ENCODE measurements at regions of chr2 and their contacts with region 1.

Region 1: DNA sequence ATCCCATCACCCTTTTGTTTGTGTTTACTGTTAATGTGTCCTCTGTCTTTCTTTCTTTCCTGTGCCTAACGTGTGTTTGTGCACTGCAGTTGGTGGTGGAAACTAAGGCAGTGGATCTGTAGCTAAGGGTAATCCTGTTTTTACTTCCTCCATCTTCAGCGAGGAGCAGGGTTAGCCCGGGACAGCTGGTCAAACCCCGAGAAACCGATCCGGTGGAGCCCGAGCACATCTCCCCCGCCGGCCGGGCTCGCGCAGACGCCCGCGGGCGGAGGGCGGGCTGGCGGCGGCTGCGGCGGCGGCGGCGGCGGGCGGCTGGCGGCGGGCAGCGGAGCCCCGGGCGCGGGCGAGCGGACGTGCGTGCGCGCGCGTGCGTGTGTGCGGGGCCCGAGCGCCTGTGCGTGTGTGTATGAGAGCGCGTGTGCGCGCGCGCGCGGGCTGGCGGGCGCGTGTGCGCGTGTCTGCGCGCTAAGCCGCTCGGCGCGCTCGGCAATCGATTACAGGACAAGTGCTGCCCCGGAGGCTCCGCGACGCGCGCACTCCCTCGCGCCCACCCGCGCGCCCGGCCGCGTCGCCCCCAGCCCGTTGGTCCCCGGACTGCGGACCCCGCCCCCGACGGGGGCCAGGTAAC is at the start of gene IKZF2:
- DNase-seq: peak; percentile 86
- ATAC-seq: peak; percentile 72
- H3K4me3 ChIP-seq: peak within 1 kb of the TSS; percentile 91
- H3K27ac ChIP-seq: peak within 1 kb of the TSS; percentile 73
- H3K4me1 ChIP-seq: peaks cover 24% of the 10 kb centered on the region
- H3K27me3 ChIP-seq: no peaks in the 10 kb centered on the region
- CTCF ChIP-seq: no peak
- total RNA-seq, gene IKZF2: 5.2 and 8.2 TPM in 2 replicates

Region 2: DNA sequence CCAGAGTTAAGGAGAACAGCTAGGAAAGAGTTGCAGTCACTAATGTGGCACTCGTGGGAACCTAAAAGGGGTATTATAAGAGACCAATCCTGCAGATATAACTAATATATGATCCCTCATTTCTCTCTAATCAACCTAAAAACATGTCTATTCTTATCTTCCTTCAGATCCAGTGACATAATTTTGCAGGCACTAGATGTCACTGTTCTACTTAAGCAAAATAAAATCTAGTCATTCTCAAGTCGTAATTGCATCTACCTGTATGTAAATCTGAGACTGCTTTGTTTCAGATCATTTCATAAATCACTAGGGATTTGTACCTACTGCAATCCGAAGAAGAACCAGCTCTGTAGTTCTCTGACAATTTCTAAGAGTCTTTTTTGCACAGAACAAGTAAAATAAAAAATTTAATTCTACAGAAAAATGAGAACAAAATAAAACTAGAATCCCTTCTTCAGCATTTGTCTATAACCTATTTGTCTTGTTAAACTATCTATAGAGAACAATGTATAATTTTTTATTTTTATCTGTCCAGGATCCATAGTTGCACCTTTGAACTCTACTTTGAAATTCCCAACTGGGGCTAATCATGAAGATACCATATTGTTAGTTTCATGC is 556.4 kb before region 1 on chr2:
- CTCF ChIA-PET with region 1: no interaction called
- POLR2A ChIA-PET with region 1: no interaction called
- intact Hi-C with region 1: loop called (anchors 1 kb)
- DNase-seq: peak; percentile 72
- ATAC-seq: peak; percentile 75
- H3K4me3 ChIP-seq: no peak overlapping the region
- H3K27ac ChIP-seq: no peak overlapping the region
- H3K4me1 ChIP-seq: peaks cover 28% of the 10 kb centered on the region
- H3K27me3 ChIP-seq: no peaks in the 10 kb centered on the region
- CTCF ChIP-seq: peak; percentile 82

Region 3: DNA sequence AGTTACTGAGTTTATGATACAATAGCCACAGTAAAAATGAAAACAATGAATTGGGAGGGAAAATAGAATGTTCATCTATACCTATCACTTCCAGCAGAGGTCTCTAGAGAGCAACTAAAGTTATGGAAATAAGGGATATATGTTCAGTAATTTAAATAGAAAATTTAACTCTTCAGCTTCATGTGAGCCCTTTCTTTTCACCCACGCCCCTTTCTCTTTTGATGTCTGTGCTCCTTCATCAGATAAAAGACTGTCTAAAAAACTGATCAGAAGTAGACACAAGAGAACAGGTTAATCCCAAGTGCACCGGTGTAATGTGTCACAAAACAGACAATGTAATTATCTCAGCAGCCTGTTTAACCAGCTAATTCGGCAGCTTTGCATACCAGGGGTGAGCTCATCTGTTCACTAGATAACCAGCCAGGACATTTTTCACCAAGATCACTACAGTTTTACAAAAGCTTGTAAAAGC is 374.5 kb before region 1 on chr2:
- CTCF ChIA-PET with region 1: interaction called, 23 read pairs
- POLR2A ChIA-PET with region 1: no interaction called
- intact Hi-C with region 1: loop called (anchors 1 kb)
- DNase-seq: peak; percentile 77
- ATAC-seq: peak; percentile 63
- H3K4me3 ChIP-seq: peak overlapping the region; percentile 45
- H3K27ac ChIP-seq: no peak overlapping the region
- H3K4me1 ChIP-seq: peaks cover 11% of the 10 kb centered on the region; the same call in 1 of the 2 replicates
- H3K27me3 ChIP-seq: no peaks in the 10 kb centered on the region
- CTCF ChIP-seq: peak; percentile 79

Region 4: DNA sequence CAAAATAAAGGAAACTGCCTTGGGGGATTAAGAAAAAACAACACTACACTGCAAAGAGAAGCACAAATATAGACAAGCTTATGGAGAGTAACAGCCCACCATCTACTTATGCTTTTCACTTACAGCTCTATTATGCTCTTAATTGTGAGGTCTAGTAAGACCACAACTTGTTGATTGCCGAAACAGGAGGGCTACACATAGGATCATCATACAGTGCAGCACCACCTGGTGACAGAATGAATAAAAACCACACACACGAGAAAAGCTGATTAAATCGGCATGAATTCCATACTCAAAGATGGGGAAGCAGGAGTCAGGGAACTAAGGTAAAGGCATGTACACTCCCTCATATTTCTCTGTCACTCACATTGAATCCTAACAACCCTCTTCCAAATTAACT is 259.4 kb before region 1 on chr2:
- CTCF ChIA-PET with region 1: interaction called, 4 read pairs
- POLR2A ChIA-PET with region 1: interaction called, 7 read pairs
- intact Hi-C with region 1: loop called (anchors 5 kb)
- DNase-seq: peak; percentile 75
- ATAC-seq: peak; percentile 79
- H3K4me3 ChIP-seq: no peak overlapping the region
- H3K27ac ChIP-seq: no peak overlapping the region
- H3K4me1 ChIP-seq: no peaks in the 10 kb centered on the region
- H3K27me3 ChIP-seq: no peaks in the 10 kb centered on the region
- CTCF ChIP-seq: peak; percentile 81

Region 5: DNA sequence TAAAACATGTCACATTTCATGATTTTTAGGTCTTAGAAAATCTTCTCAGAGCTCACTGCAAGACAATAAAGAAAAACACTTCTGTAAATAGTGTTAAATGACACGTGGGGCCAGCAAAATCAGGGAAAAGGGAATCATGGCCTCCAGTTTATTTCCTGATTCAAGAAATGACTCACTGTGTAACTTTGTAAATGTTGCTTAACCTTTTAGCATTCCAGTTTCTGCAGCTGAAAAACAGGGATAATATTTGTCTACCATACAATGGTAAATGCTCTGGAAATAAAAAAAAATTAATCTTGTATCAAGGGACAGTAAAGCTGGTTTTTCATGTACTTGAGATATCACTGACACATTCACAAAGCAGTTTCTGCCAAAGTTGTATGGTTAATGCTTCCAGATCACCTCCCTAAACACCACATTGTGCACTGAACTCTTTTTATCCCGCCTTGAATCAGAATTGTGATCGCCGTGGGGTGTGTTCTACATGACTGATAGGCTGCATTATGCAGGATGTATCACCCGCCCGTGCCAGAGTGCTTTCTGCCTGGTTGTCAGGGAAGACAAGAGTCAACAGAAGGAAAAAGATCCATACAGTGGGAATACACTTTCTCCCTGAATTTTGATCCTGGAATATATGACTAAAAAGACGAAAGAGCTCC is 239.0 kb before region 1 on chr2:
- CTCF ChIA-PET with region 1: no interaction called
- POLR2A ChIA-PET with region 1: no interaction called
- intact Hi-C with region 1: loop called (anchors 1 kb)
- DNase-seq: peak; percentile 92
- ATAC-seq: peak; percentile 83
- H3K4me3 ChIP-seq: peak overlapping the region; percentile 54
- H3K27ac ChIP-seq: peak overlapping the region; percentile 94
- H3K4me1 ChIP-seq: peaks cover 55% of the 10 kb centered on the region
- H3K27me3 ChIP-seq: no peaks in the 10 kb centered on the region
- CTCF ChIP-seq: no peak

Region 6: GRCh38 chr2:213034585-213034984 is 117.0 kb before region 1 on chr2:
- CTCF ChIA-PET with region 1: interaction called, 8 read pairs
- POLR2A ChIA-PET with region 1: no interaction called
- intact Hi-C with region 1: loop called (anchors 5 kb)
- DNase-seq: no peak
- ATAC-seq: no peak
- H3K4me3 ChIP-seq: no peak overlapping the region
- H3K27ac ChIP-seq: no peak overlapping the region
- H3K4me1 ChIP-seq: no peaks in the 10 kb centered on the region; the same call in 1 of the 2 replicates
- H3K27me3 ChIP-seq: no peaks in the 10 kb centered on the region
- CTCF ChIP-seq: no peak

Region 7: DNA sequence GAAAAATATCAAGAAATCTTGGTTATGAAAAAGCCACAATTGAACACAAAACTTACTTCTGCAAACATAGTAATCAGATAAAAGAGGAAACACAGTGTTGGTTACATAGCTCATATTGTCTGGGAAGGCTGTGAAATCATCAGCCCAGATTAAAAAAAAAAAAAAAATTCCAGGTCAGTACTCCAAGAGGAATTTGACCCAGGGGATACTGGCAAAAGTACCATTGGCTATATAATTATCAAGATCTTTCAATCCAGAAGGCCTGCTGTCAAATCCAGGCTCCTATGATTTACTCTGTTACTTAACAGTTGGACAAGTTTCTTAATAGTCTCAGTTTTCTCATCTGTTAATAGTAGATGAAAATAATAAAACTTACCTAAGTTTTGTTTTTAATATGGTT is 12.7 kb after region 1 on chr2:
- CTCF ChIA-PET with region 1: interaction called, 10 read pairs
- POLR2A ChIA-PET with region 1: no interaction called
- intact Hi-C with region 1: no loop called
- DNase-seq: no peak
- ATAC-seq: no peak
- H3K4me3 ChIP-seq: no peak overlapping the region
- H3K27ac ChIP-seq: no peak overlapping the region
- H3K4me1 ChIP-seq: peaks cover 10% of the 10 kb centered on the region; the same call in 1 of the 2 replicates
- H3K27me3 ChIP-seq: no peaks in the 10 kb centered on the region
- CTCF ChIP-seq: no peak